ENCODE measurements at regions of chr6 and their contacts with region 1.

Region 1: GRCh38 chr6:90403489-90404381 is 107.1 kb upstream of the BACH2 start:
- DNase-seq: peak in 1 of 5 donors; percentile 9
- H3K4me3 ChIP-seq: no peak overlapping the region
- H3K4me3 Mint-ChIP-seq: peak overlapping the region in 6 of 8 donors; percentile 21 to 76 (median 60)
- H3K27ac ChIP-seq: no peak overlapping the region
- H3K27ac Mint-ChIP-seq: peak overlapping the region; percentile 80 to 94 (median 90)
- H3K4me1 ChIP-seq: peaks cover 63% of the 10 kb centered on the region
- H3K4me1 Mint-ChIP-seq: peaks cover 38 to 66% (median 50%) of the 10 kb centered on the region in 4 donors
- H3K27me3 ChIP-seq: no peaks in the 10 kb centered on the region
- H3K27me3 Mint-ChIP-seq: no peaks in the 10 kb centered on the region

Region 2: GRCh38 chr6:90413867-90414266 is 10.1 kb after region 1 on chr6:
- CTCF ChIA-PET with region 1: interaction called, 21 read pairs
- POLR2A ChIA-PET with region 1: interaction called, 198 read pairs
- intact Hi-C with region 1: loop called (anchors 1 kb)
- DNase-seq: peak; percentile 80 to 91 (median 86)
- H3K4me3 ChIP-seq: peak overlapping the region; percentile 25 to 30
- H3K4me3 Mint-ChIP-seq: peak overlapping the region; percentile 79 to 93 (median 84)
- H3K27ac ChIP-seq: peak overlapping the region; percentile 34
- H3K27ac Mint-ChIP-seq: peak overlapping the region; percentile 88 to 100 (median 96)
- H3K4me1 ChIP-seq: peaks cover 38% of the 10 kb centered on the region
- H3K4me1 Mint-ChIP-seq: peaks cover 31 to 62% (median 44%) of the 10 kb centered on the region in 4 donors
- H3K27me3 ChIP-seq: no peaks in the 10 kb centered on the region
- H3K27me3 Mint-ChIP-seq: peaks cover 2% of the 10 kb centered on the region in 2 donors

Region 3: GRCh38 chr6:90425161-90425641 is 21.5 kb after region 1 on chr6:
- CTCF ChIA-PET with region 1: interaction called, 10 read pairs
- POLR2A ChIA-PET with region 1: interaction called, 198 read pairs
- intact Hi-C with region 1: no loop called
- DNase-seq: peak; percentile 29 to 58 (median 49)
- H3K4me3 ChIP-seq: peak overlapping the region in 1 of 2 donors; percentile 36
- H3K4me3 Mint-ChIP-seq: peak overlapping the region; percentile 63 to 88 (median 82)
- H3K27ac ChIP-seq: peak overlapping the region; percentile 50
- H3K27ac Mint-ChIP-seq: peak overlapping the region; percentile 58 to 95 (median 91)
- H3K4me1 ChIP-seq: peaks cover 20% of the 10 kb centered on the region
- H3K4me1 Mint-ChIP-seq: peaks cover 13 to 19% (median 16%) of the 10 kb centered on the region in 4 donors
- H3K27me3 ChIP-seq: no peaks in the 10 kb centered on the region
- H3K27me3 Mint-ChIP-seq: no peaks in the 10 kb centered on the region

Region 4: GRCh38 chr6:90472744-90473143 is 69.0 kb after region 1 on chr6:
- CTCF ChIA-PET with region 1: interaction called, 129 read pairs
- POLR2A ChIA-PET with region 1: interaction called, 13 read pairs
- intact Hi-C with region 1: no loop called
- DNase-seq: peak in 4 of 5 donors; percentile 25 to 44 (median 36)
- H3K4me3 ChIP-seq: no peak overlapping the region
- H3K4me3 Mint-ChIP-seq: peak overlapping the region; percentile 63 to 87 (median 78)
- H3K27ac ChIP-seq: no peak overlapping the region
- H3K27ac Mint-ChIP-seq: peak overlapping the region in 6 of 7 donors; percentile 11 to 79 (median 76)
- H3K4me1 ChIP-seq: peaks cover 43% of the 10 kb centered on the region
- H3K4me1 Mint-ChIP-seq: peaks cover 28 to 66% (median 36%) of the 10 kb centered on the region in 4 donors
- H3K27me3 ChIP-seq: no peaks in the 10 kb centered on the region
- H3K27me3 Mint-ChIP-seq: no peaks in the 10 kb centered on the region

Region 5: DNA sequence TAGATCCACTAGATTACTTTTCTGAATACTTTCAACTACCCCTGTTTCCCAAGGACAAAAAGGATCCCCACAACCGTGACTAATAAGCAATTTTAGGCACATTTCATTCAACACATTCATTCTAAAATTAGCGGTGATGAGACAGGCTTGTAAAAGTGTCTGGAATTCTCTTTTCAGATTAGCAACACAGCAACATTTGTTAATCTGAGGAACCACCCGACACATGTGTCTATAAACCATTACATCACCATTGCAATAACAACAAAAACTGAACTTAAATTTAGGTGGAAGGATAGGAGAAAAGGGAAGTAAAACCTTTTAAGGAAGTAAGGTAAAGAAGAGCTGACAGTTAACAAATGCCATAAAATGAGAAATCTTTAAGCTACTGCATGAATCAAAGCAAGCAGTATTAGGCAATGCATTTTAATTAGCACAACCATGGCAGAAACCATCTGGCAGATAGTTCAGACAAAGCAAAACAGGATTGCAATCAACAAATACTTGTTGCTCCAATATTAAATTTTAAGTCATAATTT is 134.1 kb after region 1 on chr6:
- CTCF ChIA-PET with region 1: no interaction called
- POLR2A ChIA-PET with region 1: no interaction called
- intact Hi-C with region 1: no loop called
- DNase-seq: no peak
- H3K4me3 ChIP-seq: no peak overlapping the region
- H3K4me3 Mint-ChIP-seq: no peak overlapping the region
- H3K27ac ChIP-seq: no peak overlapping the region
- H3K27ac Mint-ChIP-seq: peak overlapping the region in 1 of 7 donors; percentile 45
- H3K4me1 ChIP-seq: no peaks in the 10 kb centered on the region
- H3K4me1 Mint-ChIP-seq: peaks cover 0 to 2% (median 0%) of the 10 kb centered on the region in 4 donors
- H3K27me3 ChIP-seq: no peaks in the 10 kb centered on the region
- H3K27me3 Mint-ChIP-seq: no peaks in the 10 kb centered on the region